CD4-positive, alpha-beta T cell (primary cell): ENCODE measurements at regions of chr2 and their contacts with region 1.

Region 1: DNA sequence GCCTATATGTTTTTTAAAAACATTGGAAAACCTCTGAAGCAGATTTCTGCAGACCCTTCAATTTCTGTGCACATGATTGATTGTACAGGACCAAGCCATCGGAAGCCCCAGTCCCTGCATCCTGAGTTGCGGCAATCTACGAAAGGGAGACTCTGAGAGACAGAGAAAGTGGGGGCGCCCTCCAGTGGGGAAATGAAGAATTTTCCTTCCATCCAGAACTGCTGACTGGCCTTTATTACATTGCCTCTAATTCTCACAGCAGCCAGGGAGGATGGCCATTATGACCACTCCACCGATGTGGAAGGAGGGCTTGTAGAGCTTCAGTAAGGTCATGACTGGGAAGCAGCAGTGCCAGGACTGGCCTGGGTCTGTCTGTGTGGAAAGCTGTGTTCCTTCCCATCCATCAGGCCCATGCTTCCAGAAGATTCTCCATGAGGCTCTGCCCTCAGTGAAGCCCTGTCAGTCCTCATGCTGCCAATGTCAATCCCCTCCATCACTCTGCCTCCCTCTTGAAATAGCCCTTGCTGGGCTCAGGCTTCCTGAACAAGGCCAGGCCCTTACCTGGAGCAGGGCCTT is 20.0 kb upstream of the RESP18 start:
- DNase-seq: peak; percentile 44 to 76 (median 60)
- ATAC-seq: peak; percentile 76
- H3K4me3 ChIP-seq: no peak overlapping the region
- H3K4me3 Mint-ChIP-seq: no peak overlapping the region
- H3K27ac ChIP-seq: no peak overlapping the region
- H3K27ac Mint-ChIP-seq: no peak overlapping the region
- H3K4me1 ChIP-seq: peaks cover 5% of the 10 kb centered on the region
- H3K4me1 Mint-ChIP-seq: no peaks in the 10 kb centered on the region
- H3K27me3 ChIP-seq: peaks cover 14 to 28% of the 10 kb centered on the region in 2 experiments
- H3K27me3 Mint-ChIP-seq: peaks cover 87% of the 10 kb centered on the region
- CTCF ChIP-seq: peak; percentile 75

Region 2: DNA sequence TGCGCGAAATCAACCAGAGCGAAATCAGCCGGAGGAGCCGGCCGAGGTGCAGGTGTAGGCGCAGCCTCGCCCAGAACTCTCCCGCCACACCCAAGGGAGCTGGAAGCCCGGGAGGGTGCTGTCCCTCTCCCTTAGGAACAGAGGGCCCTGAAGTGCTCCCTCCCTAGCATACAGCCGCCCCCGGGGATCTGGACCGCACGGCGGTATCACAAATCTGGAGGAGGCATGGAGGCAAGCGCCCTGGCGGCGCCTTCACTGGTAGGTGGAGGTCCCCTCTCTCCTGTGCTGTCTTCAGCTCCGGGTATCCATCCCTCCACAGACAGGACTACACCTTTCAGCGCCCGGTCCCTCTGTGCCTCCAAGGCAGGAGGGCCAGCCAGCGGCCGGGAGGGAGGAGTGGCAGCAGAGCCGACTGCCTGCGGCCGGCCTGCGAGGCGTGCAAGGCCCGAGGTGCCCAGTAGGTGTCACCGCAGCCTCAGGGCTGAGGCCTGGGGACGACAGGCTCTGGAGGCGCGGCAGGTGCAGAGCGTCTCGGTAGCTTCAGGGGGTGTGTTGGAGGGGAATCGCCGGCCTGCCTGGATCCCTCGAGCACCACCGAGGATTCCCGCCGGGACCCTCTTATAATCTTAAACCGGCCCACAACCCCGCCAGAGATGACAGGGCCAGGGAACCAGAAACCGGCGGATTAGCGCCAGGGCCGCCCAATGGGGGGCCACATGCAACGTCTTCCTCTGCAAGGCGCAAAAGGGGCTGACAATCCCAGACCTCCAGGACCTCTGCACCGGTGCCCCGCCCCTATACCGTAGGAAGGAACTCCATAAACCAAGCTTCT is 294.6 kb before region 1 on chr2:
- CTCF ChIA-PET with region 1: no interaction called
- POLR2A ChIA-PET with region 1: no interaction called
- intact Hi-C with region 1: loop called in 1 of 2 experiments (anchors 10 kb)
- DNase-seq: peak; percentile 54 to 87 (median 72)
- ATAC-seq: peak; percentile 98
- H3K4me3 ChIP-seq: peak overlapping the region; percentile 2
- H3K4me3 Mint-ChIP-seq: peak overlapping the region; percentile 76
- H3K27ac ChIP-seq: no peak overlapping the region
- H3K27ac Mint-ChIP-seq: no peak overlapping the region
- H3K4me1 ChIP-seq: peaks cover 38% of the 10 kb centered on the region
- H3K4me1 Mint-ChIP-seq: peaks cover 20% of the 10 kb centered on the region
- H3K27me3 ChIP-seq: peaks cover 57 to 79% of the 10 kb centered on the region in 2 experiments
- H3K27me3 Mint-ChIP-seq: peaks cover 79% of the 10 kb centered on the region
- CTCF ChIP-seq: peak; percentile 97

Region 3: GRCh38 chr2:219160186-219161017 is 192.1 kb before region 1 on chr2 and contains the start of gene NHEJ1:
- CTCF ChIA-PET with region 1: no interaction called
- POLR2A ChIA-PET with region 1: interaction called, 3 read pairs
- intact Hi-C with region 1: loop called (anchors 1 to 2 kb)
- DNase-seq: peak; percentile 82 to 97 (median 90)
- ATAC-seq: peak; percentile 90
- H3K4me3 ChIP-seq: peak within 1 kb of the TSS; percentile 78
- H3K4me3 Mint-ChIP-seq: peak within 1 kb of the TSS; percentile 94
- H3K27ac ChIP-seq: peak within 1 kb of the TSS; percentile 52 to 77
- H3K27ac Mint-ChIP-seq: peak within 1 kb of the TSS; percentile 94
- H3K4me1 ChIP-seq: peaks cover 17% of the 10 kb centered on the region
- H3K4me1 Mint-ChIP-seq: peaks cover 24% of the 10 kb centered on the region
- H3K27me3 ChIP-seq: no peaks in the 10 kb centered on the region
- H3K27me3 Mint-ChIP-seq: no peaks in the 10 kb centered on the region
- CTCF ChIP-seq: peak; percentile 97
- total RNA-seq, gene NHEJ1: 7.2 to 8.5 TPM

Region 4: GRCh38 chr2:219314804-219315468 is 37.6 kb before region 1 on chr2:
- CTCF ChIA-PET with region 1: no interaction called
- POLR2A ChIA-PET with region 1: no interaction called
- intact Hi-C with region 1: loop called in 1 of 2 experiments (anchors 2 kb)
- DNase-seq: no peak
- ATAC-seq: no peak
- H3K4me3 ChIP-seq: no peak overlapping the region
- H3K4me3 Mint-ChIP-seq: no peak overlapping the region
- H3K27ac ChIP-seq: no peak overlapping the region
- H3K27ac Mint-ChIP-seq: no peak overlapping the region
- H3K4me1 ChIP-seq: no peaks in the 10 kb centered on the region
- H3K4me1 Mint-ChIP-seq: no peaks in the 10 kb centered on the region
- H3K27me3 ChIP-seq: peaks cover 8 to 11% of the 10 kb centered on the region in 2 experiments
- H3K27me3 Mint-ChIP-seq: peaks cover 28% of the 10 kb centered on the region
- CTCF ChIP-seq: no peak